CD14-positive monocyte (primary cell): ENCODE measurements at regions of chr18 and their contacts with region 1.

Region 1: DNA sequence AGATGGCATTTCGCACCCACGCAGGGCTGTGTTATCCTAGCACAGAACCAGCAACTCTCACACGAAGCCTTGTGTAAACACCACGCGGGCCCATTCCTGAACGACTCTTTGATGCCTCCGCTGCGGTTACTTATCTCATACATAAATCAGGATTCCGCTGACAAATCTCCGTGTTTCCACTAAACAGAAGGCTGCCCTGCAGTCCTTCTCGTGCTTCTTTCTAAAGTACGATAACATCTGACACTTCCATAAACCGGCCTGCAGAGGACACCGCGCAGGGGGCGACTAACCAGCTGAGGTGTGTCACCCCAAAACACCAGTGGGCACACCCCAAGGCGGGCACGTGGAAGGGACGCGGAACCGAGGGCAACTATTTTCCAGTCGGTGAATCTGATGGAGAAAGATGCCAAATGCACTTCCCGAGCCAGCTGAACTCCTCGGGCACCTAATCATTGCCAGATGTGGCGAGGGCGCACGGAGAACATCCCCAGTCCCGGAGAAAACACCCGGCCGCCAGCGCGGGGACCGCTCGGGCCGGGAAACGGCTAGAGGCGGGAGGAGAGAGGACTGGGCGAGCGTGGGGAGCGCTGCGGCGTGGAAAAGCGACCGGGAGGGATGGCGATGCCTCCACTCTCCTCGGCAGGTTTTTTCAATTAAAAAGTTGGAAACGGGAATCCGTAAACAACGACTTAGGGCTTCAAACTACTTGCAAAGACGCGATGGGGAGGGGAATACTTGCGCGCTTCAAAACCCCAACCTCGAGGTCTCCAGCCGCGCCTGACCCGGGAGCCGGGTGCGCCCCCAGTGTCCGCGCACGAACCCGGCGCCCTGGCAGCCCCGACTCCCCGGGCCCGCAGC is 721 bp downstream of the COLEC12 start:
- DNase-seq: no peak
- H3K4me3 ChIP-seq: peak overlapping the region; percentile 17 to 77 (median 44)
- H3K4me3 Mint-ChIP-seq: peak overlapping the region; percentile 82 to 93
- H3K27ac ChIP-seq: no peak overlapping the region
- H3K27ac Mint-ChIP-seq: peak overlapping the region in 2 of 7 donors; percentile 5 to 53
- H3K4me1 ChIP-seq: peaks cover 26 to 33% of the 10 kb centered on the region in 2 donors
- H3K4me1 Mint-ChIP-seq: peaks cover 30% of the 10 kb centered on the region
- H3K27me3 ChIP-seq: peaks cover 34 to 59% of the 10 kb centered on the region in 2 donors
- H3K27me3 Mint-ChIP-seq: peaks cover 53 to 67% (median 58%) of the 10 kb centered on the region in 3 donors
- CTCF ChIP-seq: no peak

Region 2: GRCh38 chr18:275486-275885 is 224.3 kb before region 1 on chr18:
- intact Hi-C with region 1: loop called in 1 of 2 experiments (anchors 10 kb)
- DNase-seq: peak; percentile 21 to 71 (median 34)
- H3K4me3 ChIP-seq: no peak overlapping the region
- H3K4me3 Mint-ChIP-seq: peak overlapping the region; percentile 11 to 51
- H3K27ac ChIP-seq: no peak overlapping the region
- H3K27ac Mint-ChIP-seq: peak overlapping the region in 6 of 7 donors; percentile 40 to 75 (median 54)
- H3K4me1 ChIP-seq: peaks cover 4 to 10% of the 10 kb centered on the region in 2 donors
- H3K4me1 Mint-ChIP-seq: peaks cover 5% of the 10 kb centered on the region
- H3K27me3 ChIP-seq: no peaks in the 10 kb centered on the region
- H3K27me3 Mint-ChIP-seq: peaks cover 4 to 8% (median 7%) of the 10 kb centered on the region in 3 donors
- CTCF ChIP-seq: no peak

Region 3: DNA sequence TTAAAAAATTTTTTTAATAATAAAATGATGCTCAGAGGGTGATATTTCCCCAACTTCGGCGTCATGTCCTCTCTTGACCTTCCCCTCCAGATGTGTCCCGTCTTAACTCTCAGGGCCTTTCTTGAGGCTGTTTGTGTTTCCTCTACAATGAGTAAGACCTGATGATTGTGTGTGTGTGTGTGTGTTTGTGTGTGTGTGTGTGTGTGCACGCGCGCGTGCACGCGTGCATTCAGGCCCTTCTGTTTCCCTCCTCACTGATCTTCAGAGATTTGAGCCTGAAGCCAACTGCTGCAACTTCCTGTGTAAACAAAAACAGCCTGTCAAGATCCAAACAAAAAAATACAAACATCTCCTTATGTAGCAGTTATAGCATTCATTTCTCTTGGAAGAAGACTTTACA is 56.3 kb after region 1 on chr18:
- intact Hi-C with region 1: no loop called
- DNase-seq: no peak
- H3K4me3 ChIP-seq: no peak overlapping the region
- H3K4me3 Mint-ChIP-seq: no peak overlapping the region
- H3K27ac ChIP-seq: no peak overlapping the region
- H3K27ac Mint-ChIP-seq: no peak overlapping the region
- H3K4me1 ChIP-seq: no peaks in the 10 kb centered on the region
- H3K4me1 Mint-ChIP-seq: no peaks in the 10 kb centered on the region
- H3K27me3 ChIP-seq: no peaks in the 10 kb centered on the region
- H3K27me3 Mint-ChIP-seq: peaks cover 2 to 3% (median 2%) of the 10 kb centered on the region in 3 donors
- CTCF ChIP-seq: no peak

Region 4: DNA sequence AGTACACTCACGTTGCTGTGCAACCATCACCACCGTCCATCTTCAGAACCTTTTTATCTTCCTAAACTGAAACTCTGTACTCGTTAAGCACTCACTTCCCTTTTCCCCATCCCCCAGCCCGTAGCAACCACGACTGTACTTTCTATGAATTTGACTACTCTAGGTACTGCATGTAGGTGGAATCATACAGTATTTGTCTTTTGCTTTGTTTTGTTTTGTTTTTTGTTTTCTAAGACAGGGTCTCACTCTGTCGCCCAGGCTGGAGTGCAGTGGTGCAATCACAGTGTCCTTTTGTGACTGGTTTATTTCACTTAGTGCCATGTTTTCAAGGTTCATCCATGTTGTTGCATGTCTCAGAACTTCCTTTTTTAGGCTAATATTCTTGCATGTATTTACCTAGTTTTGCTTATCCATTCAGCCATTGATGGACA is 150.7 kb after region 1 on chr18:
- intact Hi-C with region 1: no loop called
- DNase-seq: peak; percentile 26 to 32 (median 28)
- H3K4me3 ChIP-seq: peak overlapping the region; percentile 8 to 58 (median 36)
- H3K4me3 Mint-ChIP-seq: peak overlapping the region; percentile 77 to 86
- H3K27ac ChIP-seq: no peak overlapping the region
- H3K27ac Mint-ChIP-seq: peak overlapping the region in 2 of 7 donors; percentile 11 to 78
- H3K4me1 ChIP-seq: peaks cover 4 to 19% of the 10 kb centered on the region in 2 donors
- H3K4me1 Mint-ChIP-seq: peaks cover 20% of the 10 kb centered on the region
- H3K27me3 ChIP-seq: no peaks in the 10 kb centered on the region
- H3K27me3 Mint-ChIP-seq: peaks cover 0 to 4% (median 2%) of the 10 kb centered on the region in 3 donors
- CTCF ChIP-seq: no peak